ENCODE measurements at regions of chr2 and their contacts with region 1.

Region 1: DNA sequence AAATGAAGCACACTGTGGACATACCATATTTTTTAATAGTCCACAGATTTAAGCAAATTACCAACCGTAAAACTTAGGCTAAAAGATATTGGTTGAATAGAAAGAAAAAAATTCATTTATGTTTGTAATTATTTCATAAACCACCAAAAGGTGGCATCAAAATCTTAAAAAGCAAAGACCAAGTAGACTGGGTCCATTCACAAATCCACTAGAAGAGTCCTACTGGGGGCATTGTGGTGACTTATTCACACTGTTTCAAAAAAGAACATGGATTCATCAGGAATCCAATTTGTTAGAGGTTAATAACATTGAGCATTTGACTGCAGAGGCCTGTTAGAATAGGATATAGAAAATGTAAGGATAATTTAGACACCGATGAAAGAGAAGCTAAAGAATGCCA is 194.9 kb upstream of the KYNU start:
- DNase-seq: no peak
- H3K4me3 ChIP-seq: no peak overlapping the region
- H3K27ac ChIP-seq: no peak overlapping the region
- H3K4me1 ChIP-seq: no peaks in the 10 kb centered on the region
- H3K27me3 ChIP-seq: no peaks in the 10 kb centered on the region
- CTCF ChIP-seq: no peak

Region 2: GRCh38 chr2:141271346-141271745 is 1411.2 kb before region 1 on chr2:
- intact Hi-C with region 1: no loop called
- DNase-seq: no peak
- H3K4me3 ChIP-seq: no peak overlapping the region
- H3K27ac ChIP-seq: no peak overlapping the region
- H3K4me1 ChIP-seq: no peaks in the 10 kb centered on the region
- H3K27me3 ChIP-seq: no peaks in the 10 kb centered on the region
- CTCF ChIP-seq: no peak

Region 3: DNA sequence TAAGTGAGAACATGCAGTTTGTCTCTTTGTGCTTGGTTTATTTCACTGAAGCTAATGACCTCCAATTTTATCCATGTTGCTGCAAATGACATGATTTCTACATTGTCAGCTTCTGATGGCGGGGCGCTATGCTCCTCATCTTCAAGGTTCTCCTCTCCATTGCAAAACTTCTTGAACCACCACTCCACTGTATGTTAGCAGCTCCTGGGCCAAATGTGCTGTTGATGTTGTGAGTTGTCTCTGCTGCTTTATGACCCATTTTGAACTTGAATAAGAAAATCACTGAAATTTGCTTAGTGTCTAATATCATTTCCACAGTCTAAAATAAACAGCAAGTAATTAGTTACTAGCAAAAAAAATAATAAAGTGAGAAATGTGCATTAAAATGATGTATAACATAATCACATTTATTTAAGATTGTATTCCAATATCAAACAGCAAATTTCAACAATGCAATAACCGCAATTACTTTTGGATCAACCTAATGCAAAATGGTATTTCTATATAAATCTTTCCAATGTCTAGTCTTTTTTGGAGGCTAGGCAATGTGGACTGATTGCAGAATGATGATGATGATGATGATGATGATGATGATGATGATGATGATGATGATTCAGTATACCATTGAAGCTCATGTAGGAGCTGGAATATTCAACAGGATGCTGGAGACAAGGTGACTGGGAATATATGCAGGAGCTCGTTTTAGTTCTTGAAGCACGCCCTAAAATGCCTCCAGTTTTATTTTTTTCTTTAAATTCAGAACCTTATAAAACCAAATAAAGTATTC is 110.0 kb before region 1 on chr2:
- intact Hi-C with region 1: no loop called
- DNase-seq: no peak
- H3K4me3 ChIP-seq: no peak overlapping the region
- H3K27ac ChIP-seq: no peak overlapping the region
- H3K4me1 ChIP-seq: no peaks in the 10 kb centered on the region
- H3K27me3 ChIP-seq: no peaks in the 10 kb centered on the region
- CTCF ChIP-seq: no peak

Region 4: GRCh38 chr2:142724713-142725349 is 42.3 kb after region 1 on chr2:
- intact Hi-C with region 1: no loop called
- DNase-seq: no peak
- H3K4me3 ChIP-seq: no peak overlapping the region
- H3K27ac ChIP-seq: no peak overlapping the region
- H3K4me1 ChIP-seq: no peaks in the 10 kb centered on the region
- H3K27me3 ChIP-seq: no peaks in the 10 kb centered on the region
- CTCF ChIP-seq: no peak

Region 5: DNA sequence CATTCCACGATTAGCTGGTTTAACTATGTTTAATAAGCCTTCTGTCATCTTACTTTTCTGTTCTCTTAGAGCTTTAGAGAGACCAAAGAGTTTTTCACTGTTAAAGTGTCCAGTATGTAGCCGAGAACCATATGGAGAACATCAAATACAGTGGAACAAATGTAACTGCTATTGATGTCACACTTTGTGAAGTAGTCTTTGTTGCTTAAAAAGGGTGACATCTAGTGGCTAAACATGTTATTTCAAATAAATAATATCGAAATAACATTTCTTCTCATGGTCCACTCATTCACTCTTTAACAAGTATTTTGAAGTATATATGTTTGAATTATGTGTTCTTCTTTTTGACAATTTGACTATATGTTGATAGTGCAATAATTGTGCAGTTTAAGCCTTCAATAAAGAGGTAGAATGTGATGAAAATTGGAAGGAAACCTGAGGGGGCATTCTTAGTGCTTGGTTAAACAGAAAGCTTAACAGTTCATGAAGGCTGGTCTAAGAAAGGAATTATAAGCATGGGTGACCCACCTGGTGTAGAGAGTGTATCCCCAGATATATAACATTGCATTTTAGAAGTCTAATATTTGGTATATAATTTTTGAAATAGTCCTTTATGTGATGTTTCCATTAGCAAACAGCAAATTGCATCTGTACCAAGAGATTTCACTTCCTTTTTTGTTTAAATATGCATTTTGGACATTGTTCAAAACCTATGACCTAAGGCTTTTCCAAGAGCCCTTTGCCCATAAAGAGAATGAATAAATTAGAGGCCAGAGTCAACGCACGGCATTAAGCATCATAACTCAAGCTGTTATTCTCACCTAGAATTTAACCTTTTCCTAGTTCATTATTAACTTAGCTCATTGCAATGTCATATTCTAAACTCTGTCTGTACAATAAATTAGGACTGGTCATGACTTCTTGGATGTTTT is 307.0 kb after region 1 on chr2:
- intact Hi-C with region 1: loop called (anchors 10 kb)
- DNase-seq: no peak
- H3K4me3 ChIP-seq: no peak overlapping the region
- H3K27ac ChIP-seq: no peak overlapping the region
- H3K4me1 ChIP-seq: no peaks in the 10 kb centered on the region
- H3K27me3 ChIP-seq: no peaks in the 10 kb centered on the region
- CTCF ChIP-seq: peak; percentile 44